Heart right ventricle (tissue), 16 donors: ENCODE measurements at regions of chr21 and their contacts with region 1.

Region 1: DNA sequence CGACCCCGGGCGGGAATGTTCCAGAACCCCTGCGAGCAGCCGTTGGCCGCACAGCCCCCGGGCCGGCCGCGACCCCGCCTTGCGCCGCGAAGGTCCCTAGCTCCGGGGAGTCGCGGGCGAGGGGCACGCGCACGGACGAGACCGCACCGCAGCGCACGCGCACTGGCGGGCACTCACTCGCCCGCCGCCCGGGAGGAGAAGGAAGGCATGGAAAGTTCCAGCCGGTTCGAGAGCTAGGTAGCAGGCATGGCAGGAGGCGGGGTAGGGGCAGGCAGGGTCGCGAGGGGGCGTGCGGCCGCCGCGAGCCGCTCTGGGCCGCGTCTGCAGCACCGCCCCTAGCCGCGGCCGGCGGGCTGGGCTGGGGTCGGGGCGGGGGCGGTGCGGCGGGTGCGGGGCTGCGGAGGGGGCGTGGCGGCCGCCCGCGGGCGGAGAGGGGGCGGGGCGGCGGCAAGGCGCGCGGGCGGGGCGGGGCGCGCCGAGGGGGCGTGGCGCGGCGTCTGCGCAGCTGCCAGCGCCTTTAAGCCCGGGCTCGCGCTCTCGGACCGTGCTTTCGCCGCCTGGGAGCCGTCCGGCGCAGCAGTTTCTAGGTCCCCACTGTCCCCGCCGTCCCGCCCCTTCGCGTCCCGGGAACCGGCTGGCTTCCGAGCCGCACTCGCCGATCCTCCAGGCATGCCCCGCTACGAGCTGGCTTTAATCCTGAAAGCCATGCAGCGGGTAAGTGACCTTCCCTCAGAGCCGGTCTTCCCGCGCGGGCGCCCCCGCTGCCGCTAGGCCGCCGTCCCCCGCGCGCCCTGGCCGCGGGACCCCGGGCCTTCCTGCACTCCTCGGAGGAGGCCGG is at the starts of genes MRPS6 and SLC5A3:
- DNase-seq: peak; percentile 82 to 88
- ATAC-seq: peak; percentile 87 to 94 (median 92)
- H3K4me3 ChIP-seq: peak within 1 kb of the TSS; percentile 30 to 85 (median 79)
- H3K27ac ChIP-seq: peak within 1 kb of the TSS; percentile 46 to 92 (median 86)
- H3K4me1 ChIP-seq: peaks cover 0 to 48% (median 28%) of the 10 kb centered on the region in 9 donors
- H3K27me3 ChIP-seq: no peaks in the 10 kb centered on the region
- CTCF ChIP-seq: peak in 2 of 9 donors; percentile 9 to 10
- total RNA-seq, gene MRPS6: 32.0 to 68.1 (median 38.4) TPM
- total RNA-seq, gene SLC5A3: 1.8 to 7.4 (median 2.8) TPM

Region 2: DNA sequence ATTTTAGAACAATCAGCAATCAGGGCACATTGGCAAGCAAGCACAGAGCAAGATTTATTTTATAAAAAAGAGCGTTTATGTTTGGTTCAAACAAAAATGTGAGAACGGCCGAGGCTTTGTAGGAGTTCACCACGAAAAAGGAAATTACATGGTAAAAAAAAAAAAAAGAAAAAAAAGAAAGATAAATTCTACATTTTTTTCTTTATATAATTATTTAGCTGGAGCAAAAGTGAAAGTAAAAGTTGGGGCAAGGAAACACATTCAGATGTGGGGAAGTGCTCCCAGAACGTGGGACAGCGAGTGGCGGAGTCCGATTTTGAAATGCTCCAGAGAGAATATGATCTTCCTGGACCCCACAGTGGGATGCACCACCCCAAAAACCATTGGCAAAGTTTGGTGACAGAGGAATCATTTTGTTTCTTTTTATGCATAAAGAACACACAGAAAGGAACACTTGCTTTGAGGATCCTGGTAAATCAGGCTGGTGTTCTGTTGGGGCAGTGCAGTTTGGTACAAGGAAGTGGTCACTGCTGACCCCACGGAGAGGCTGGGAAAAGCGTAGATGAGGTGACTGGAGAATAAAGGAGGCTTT is 141.4 kb before region 1 on chr21:
- intact Hi-C with region 1: loop called in 2 of 10 experiments (anchors 10 kb)
- DNase-seq: no peak
- ATAC-seq: peak in 7 of 8 donors; percentile 44 to 78 (median 64)
- H3K4me3 ChIP-seq: peak overlapping the region in 9 of 10 donors; percentile 16 to 57 (median 45)
- H3K27ac ChIP-seq: peak overlapping the region in 6 of 10 donors; percentile 17 to 90 (median 48)
- H3K4me1 ChIP-seq: peaks cover 0 to 20% (median 8%) of the 10 kb centered on the region in 9 donors
- H3K27me3 ChIP-seq: no peaks in the 10 kb centered on the region
- CTCF ChIP-seq: no peak

Region 3: GRCh38 chr21:34129039-34129891 is 56.0 kb after region 1 on chr21:
- intact Hi-C with region 1: loop called in 3 of 10 experiments (anchors 1 to 5 kb)
- DNase-seq: peak; percentile 41 to 79
- ATAC-seq: peak; percentile 90 to 95 (median 92)
- H3K4me3 ChIP-seq: peak overlapping the region in 7 of 10 donors; percentile 2 to 34 (median 24)
- H3K27ac ChIP-seq: peak overlapping the region; percentile 34 to 82 (median 76)
- H3K4me1 ChIP-seq: peaks cover 3 to 70% (median 62%) of the 10 kb centered on the region in 9 donors
- H3K27me3 ChIP-seq: no peaks in the 10 kb centered on the region
- CTCF ChIP-seq: peak in 8 of 9 donors; percentile 8 to 63 (median 40)

Region 4: GRCh38 chr21:34345091-34345871 is 272.0 kb after region 1 on chr21:
- intact Hi-C with region 1: loop called in 6 of 10 experiments (anchors 2 to 5 kb)
- DNase-seq: peak in 1 of 2 donors; percentile 36
- ATAC-seq: peak in 7 of 8 donors; percentile 21 to 62 (median 46)
- H3K4me3 ChIP-seq: peak overlapping the region in 1 of 10 donors; percentile 3
- H3K27ac ChIP-seq: peak overlapping the region in 9 of 10 donors; percentile 2 to 70 (median 47)
- H3K4me1 ChIP-seq: peaks cover 3 to 43% (median 10%) of the 10 kb centered on the region in 9 donors
- H3K27me3 ChIP-seq: no peaks in the 10 kb centered on the region
- CTCF ChIP-seq: no peak

Region 5: GRCh38 chr21:34614633-34615486 is 541.6 kb after region 1 on chr21 and contains the start of gene RCAN1:
- intact Hi-C with region 1: loop called in 1 of 10 experiments (anchors 10 kb)
- DNase-seq: peak; percentile 87 to 92
- ATAC-seq: peak; percentile 97 to 99 (median 98)
- H3K4me3 ChIP-seq: peak within 1 kb of the TSS; percentile 40 to 87 (median 74)
- H3K27ac ChIP-seq: peak within 1 kb of the TSS; percentile 64 to 97 (median 91)
- H3K4me1 ChIP-seq: peaks cover 0 to 51% (median 31%) of the 10 kb centered on the region in 9 donors
- H3K27me3 ChIP-seq: no peaks in the 10 kb centered on the region
- CTCF ChIP-seq: peak in 1 of 9 donors; percentile 10
- total RNA-seq, gene RCAN1: 30.8 to 389 (median 62.2) TPM